GM13977 (cell line): ENCODE measurements at regions of chr5 and their contacts with region 1.

Region 1: GRCh38 chr5:119411935-119412602 is 40.2 kb upstream of the HSD17B4 start:
- DNase-seq: peak; percentile 32
- CTCF ChIP-seq: peak; percentile 85

Region 2: DNA sequence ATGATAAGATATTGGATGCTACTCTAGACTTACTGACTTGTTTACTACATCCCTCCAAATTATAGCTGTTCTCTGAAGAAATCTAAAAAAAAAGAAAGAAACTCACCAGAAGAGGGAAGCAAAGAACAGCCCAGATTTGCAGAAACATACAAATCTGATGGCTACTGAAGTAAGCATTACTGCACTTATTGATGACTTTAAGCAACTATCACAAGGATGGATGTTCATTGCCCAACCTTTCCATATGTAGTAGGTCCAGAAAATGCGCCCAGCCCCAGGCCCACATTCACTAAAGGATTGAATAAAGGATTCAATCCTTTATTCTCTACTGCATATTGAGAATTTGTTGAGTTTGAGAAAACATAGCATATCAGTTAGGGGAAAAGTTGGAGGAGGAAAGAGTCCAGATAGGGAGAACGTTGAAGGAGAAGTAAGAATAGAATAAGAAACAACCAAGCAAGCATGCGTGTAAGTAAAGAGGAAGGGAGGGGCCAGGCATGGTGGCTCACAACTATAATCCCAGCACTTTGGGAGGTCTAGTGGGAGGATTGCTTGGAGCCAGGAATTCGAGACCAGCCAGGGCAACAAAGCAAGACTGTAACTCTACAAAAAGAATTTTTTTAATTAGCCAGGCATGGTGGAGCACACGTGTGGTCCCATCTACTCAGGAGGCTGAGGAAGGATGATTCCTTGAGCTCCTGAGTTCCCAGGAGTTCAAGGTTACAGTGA is 389.9 kb before region 1 on chr5:
- in situ Hi-C with region 1: loop called (anchors 10 kb)
- DNase-seq: peak; percentile 41
- CTCF ChIP-seq: peak; percentile 56

Region 3: GRCh38 chr5:119315516-119315949 is 96.5 kb before region 1 on chr5:
- in situ Hi-C with region 1: loop called (anchors 10 kb)
- DNase-seq: peak; percentile 68
- CTCF ChIP-seq: peak; percentile 60